AG04449 (cell line): ENCODE measurements at regions of chr15 and their contacts with region 1.

Region 1: DNA sequence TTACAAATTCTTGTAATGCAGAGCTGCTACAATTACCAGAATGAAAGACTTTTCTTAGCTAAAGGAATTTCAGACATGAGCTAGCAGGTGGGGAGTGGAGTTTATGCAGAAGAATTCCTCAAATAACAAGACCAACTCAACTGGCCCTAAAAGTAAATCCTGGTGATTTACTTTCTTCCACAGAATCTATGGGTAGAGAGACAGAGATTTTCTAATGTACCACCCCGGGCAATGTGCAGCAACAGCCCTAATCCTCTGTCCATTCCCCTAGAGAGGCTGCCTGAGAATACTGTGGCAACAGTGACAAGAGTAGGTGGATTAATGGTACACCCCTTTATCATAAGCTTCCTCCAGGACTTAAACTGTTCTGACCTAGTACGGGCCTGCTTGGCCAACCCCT is 55.2 kb downstream of the AQR start:
- DNase-seq: no peak
- H3K4me3 ChIP-seq: no peak overlapping the region
- CTCF ChIP-seq: no peak

Region 2: GRCh38 chr15:34616613-34617012 is 297.7 kb before region 1 on chr15:
- CTCF ChIA-PET with region 1: interaction called, 82 read pairs
- POLR2A ChIA-PET with region 1: no interaction called
- DNase-seq: no peak
- H3K4me3 ChIP-seq: no peak overlapping the region
- CTCF ChIP-seq: peak; percentile 30

Region 3: DNA sequence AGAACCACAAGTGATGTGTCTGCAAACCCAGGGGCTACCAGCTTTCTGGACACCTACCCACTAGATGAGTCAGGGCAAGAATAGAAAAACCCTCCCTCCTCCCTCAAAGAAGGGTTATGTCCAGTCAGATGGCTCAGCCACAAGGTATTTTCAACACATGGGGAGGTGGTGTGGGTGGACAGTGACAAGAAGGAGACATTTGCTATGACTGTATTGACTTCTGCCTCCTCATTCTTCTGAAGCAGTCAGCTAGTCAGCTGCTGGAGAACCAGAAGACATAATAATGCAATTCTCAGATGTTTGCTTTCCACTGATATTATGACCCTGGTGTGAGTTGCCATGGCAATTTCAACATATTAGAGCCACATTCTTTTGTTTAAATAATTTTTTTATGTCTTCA is 264.1 kb before region 1 on chr15:
- CTCF ChIA-PET with region 1: no interaction called
- POLR2A ChIA-PET with region 1: no interaction called
- DNase-seq: peak; percentile 12
- H3K4me3 ChIP-seq: no peak overlapping the region
- CTCF ChIP-seq: no peak

Region 4: DNA sequence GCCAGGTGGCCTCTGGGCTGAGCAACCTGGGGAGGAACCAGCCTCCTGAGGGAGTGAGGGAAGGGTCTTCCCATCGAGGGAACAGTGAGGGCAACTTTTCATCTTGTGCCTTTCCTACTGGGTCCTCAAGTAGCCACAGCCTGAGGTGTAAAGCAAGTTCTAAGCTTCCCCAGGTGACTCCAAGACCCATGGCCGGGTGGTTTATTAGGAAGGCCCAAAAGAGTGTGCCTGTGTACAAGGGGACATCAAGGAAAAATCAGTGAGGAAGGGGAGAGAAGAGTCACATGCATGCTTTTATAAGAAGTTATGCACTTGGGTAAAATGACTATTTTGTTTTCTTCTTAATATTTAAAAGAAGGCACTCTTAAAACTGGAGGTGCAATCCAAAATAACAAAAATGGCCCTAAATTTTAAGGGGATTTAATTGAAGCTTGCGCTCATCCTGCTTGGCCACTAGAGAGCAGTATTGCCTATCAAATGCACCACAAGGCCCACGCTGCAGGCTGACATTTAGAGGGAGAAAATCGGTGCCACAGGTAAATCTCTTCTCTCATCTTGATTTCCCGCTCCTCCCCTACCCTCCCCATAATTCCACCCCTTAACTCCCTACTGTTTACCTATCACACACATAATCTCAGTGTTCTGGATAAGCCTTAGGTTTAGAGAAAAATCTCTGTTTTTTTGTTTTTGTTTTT is 164.1 kb after region 1 on chr15:
- CTCF ChIA-PET with region 1: no interaction called
- POLR2A ChIA-PET with region 1: no interaction called
- DNase-seq: peak; percentile 14
- H3K4me3 ChIP-seq: no peak overlapping the region
- CTCF ChIP-seq: peak; percentile 68